ENCODE measurements at regions of chr5 and their contacts with region 1.

Region 1: GRCh38 chr5:140401362-140402257 is at the start of gene ANKHD1:
- DNase-seq: peak; percentile 100
- H3K4me3 Mint-ChIP-seq: no peak within 1 kb of the TSS
- H3K27ac Mint-ChIP-seq: no peak within 1 kb of the TSS
- H3K4me1 Mint-ChIP-seq: peaks cover 19% of the 10 kb centered on the region
- H3K27me3 Mint-ChIP-seq: no peaks in the 10 kb centered on the region
- CTCF ChIP-seq: no peak
- total RNA-seq, gene ANKHD1: 142 and 146 TPM in 2 replicates

Region 2: DNA sequence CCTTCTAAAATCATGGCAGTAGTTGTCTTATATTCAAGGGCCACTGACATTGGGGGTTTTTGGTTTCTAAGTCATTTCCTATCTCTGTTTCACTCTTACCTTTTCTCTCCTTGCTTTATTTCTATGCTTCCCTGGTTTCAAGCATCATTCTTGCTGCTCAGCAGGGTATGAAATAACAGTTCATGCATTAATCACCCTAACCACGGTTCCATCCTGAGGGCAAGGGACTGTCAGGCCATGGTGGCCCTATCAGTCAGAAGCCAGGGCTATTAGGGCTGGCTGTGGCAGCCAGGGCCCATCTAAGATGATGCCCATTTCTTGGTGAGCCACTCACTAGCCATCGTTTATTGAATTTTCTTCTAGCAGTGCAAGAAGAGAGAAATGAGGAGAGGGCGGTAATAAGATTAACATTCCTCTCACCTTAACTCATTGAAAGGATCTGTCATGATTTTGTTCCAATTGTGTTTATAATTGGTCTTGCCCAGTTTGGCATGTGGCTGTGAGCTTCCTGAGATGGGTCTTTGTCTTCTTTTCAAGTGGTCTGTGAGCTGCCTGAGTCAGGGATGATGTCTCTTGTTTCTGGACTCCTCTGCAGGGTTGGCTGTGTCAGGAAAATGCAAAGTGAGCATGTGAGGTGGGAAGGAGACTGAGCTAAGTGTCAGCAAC is 181.4 kb before region 1 on chr5:
- CTCF ChIA-PET with region 1: no interaction called
- POLR2A ChIA-PET with region 1: no interaction called
- intact Hi-C with region 1: no loop called
- DNase-seq: no peak
- H3K4me3 Mint-ChIP-seq: no peak overlapping the region
- H3K27ac Mint-ChIP-seq: no peak overlapping the region
- H3K4me1 Mint-ChIP-seq: peaks cover 42% of the 10 kb centered on the region
- H3K27me3 Mint-ChIP-seq: no peaks in the 10 kb centered on the region
- CTCF ChIP-seq: no peak

Region 3: GRCh38 chr5:140336388-140336787 is 65.2 kb before region 1 on chr5:
- CTCF ChIA-PET with region 1: no interaction called
- POLR2A ChIA-PET with region 1: no interaction called
- intact Hi-C with region 1: no loop called
- DNase-seq: no peak
- H3K4me3 Mint-ChIP-seq: no peak overlapping the region
- H3K27ac Mint-ChIP-seq: no peak overlapping the region
- H3K4me1 Mint-ChIP-seq: peaks cover 16% of the 10 kb centered on the region
- H3K27me3 Mint-ChIP-seq: no peaks in the 10 kb centered on the region
- CTCF ChIP-seq: no peak

Region 4: GRCh38 chr5:140391312-140391711 is 10.3 kb before region 1 on chr5:
- CTCF ChIA-PET with region 1: interaction called, 5 read pairs
- POLR2A ChIA-PET with region 1: interaction called, 36 read pairs
- intact Hi-C with region 1: no loop called
- DNase-seq: peak; percentile 76
- H3K4me3 Mint-ChIP-seq: no peak overlapping the region
- H3K27ac Mint-ChIP-seq: peak overlapping the region; percentile 35
- H3K4me1 Mint-ChIP-seq: peaks cover 5% of the 10 kb centered on the region
- H3K27me3 Mint-ChIP-seq: no peaks in the 10 kb centered on the region
- CTCF ChIP-seq: no peak

Region 5: DNA sequence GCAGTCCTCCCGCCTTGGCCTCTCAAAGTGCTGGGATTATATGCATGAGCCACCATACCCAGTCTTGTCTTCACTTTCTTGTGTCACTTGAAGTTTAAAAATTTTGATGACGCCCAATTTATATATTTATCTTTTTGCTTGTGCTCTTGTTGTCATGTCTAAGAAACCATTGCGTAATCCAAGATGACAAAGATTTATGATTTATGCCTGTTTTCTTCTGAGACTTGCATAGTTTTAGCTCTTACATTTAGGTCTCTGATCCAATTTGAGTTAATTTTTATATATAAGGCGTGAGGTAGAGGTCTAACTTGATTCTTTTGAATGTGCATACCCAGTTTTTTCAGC is 18.6 kb after region 1 on chr5:
- CTCF ChIA-PET with region 1: interaction called, 5 read pairs
- POLR2A ChIA-PET with region 1: interaction called, 23 read pairs
- intact Hi-C with region 1: no loop called
- DNase-seq: peak; percentile 43
- H3K4me3 Mint-ChIP-seq: no peak overlapping the region
- H3K27ac Mint-ChIP-seq: no peak overlapping the region
- H3K4me1 Mint-ChIP-seq: peaks cover 39% of the 10 kb centered on the region
- H3K27me3 Mint-ChIP-seq: no peaks in the 10 kb centered on the region
- CTCF ChIP-seq: no peak

Region 6: GRCh38 chr5:140429724-140430123 is 28.1 kb after region 1 on chr5:
- CTCF ChIA-PET with region 1: interaction called, 3 read pairs
- POLR2A ChIA-PET with region 1: interaction called, 23 read pairs
- intact Hi-C with region 1: no loop called
- DNase-seq: no peak
- H3K4me3 Mint-ChIP-seq: no peak overlapping the region
- H3K27ac Mint-ChIP-seq: no peak overlapping the region
- H3K4me1 Mint-ChIP-seq: peaks cover 20% of the 10 kb centered on the region
- H3K27me3 Mint-ChIP-seq: no peaks in the 10 kb centered on the region
- CTCF ChIP-seq: no peak

Region 7: GRCh38 chr5:140547508-140548299 is 146.1 kb after region 1 on chr5 and contains the start of gene EIF4EBP3:
- CTCF ChIA-PET with region 1: interaction called, 7 read pairs
- POLR2A ChIA-PET with region 1: interaction called, 43 read pairs
- intact Hi-C with region 1: loop called (anchors 5 kb)
- DNase-seq: peak; percentile 97
- H3K4me3 Mint-ChIP-seq: peak within 1 kb of the TSS; percentile 77
- H3K27ac Mint-ChIP-seq: peak within 1 kb of the TSS; percentile 80
- H3K4me1 Mint-ChIP-seq: peaks cover 27% of the 10 kb centered on the region
- H3K27me3 Mint-ChIP-seq: no peaks in the 10 kb centered on the region
- CTCF ChIP-seq: peak; percentile 74
- total RNA-seq, gene EIF4EBP3: 25.3 and 35.3 TPM in 2 replicates

Region 8: GRCh38 chr5:140725799-140726471 is 324.3 kb after region 1 on chr5:
- CTCF ChIA-PET with region 1: no interaction called
- POLR2A ChIA-PET with region 1: interaction called, 16 read pairs
- intact Hi-C with region 1: no loop called
- DNase-seq: peak; percentile 99
- H3K4me3 Mint-ChIP-seq: peak overlapping the region; percentile 72
- H3K27ac Mint-ChIP-seq: peak overlapping the region; percentile 42
- H3K4me1 Mint-ChIP-seq: peaks cover 6% of the 10 kb centered on the region
- H3K27me3 Mint-ChIP-seq: no peaks in the 10 kb centered on the region
- CTCF ChIP-seq: no peak

Region 9: GRCh38 chr5:141135030-141135717 is 733.6 kb after region 1 on chr5 and contains the start of gene PCDHB5:
- CTCF ChIA-PET with region 1: no interaction called
- POLR2A ChIA-PET with region 1: no interaction called
- intact Hi-C with region 1: no loop called
- DNase-seq: peak; percentile 18
- H3K4me3 Mint-ChIP-seq: peak within 1 kb of the TSS; percentile 96
- H3K27ac Mint-ChIP-seq: peak within 1 kb of the TSS; percentile 93
- H3K4me1 Mint-ChIP-seq: no peaks in the 10 kb centered on the region
- H3K27me3 Mint-ChIP-seq: no peaks in the 10 kb centered on the region
- CTCF ChIP-seq: peak; percentile 60
- total RNA-seq, gene PCDHB5: 1.2 and 1.7 TPM in 2 replicates